Activated T-helper 1 cell treated with anti-CD3 and anti-CD28 coated beads, Interleukin-12 subunit alpha, Interleukin-12 subunit beta, Interleukin-2, Interleukin-4 antibody, amounts not matched to agents 30 ng/mL and 10 ng/mL and 1 ng/mL, durations not matched to agents 14 hours and 24 hours and 36 hours (primary cell): ENCODE measurements at regions of chr22 and their contacts with region 1.

Region 1: DNA sequence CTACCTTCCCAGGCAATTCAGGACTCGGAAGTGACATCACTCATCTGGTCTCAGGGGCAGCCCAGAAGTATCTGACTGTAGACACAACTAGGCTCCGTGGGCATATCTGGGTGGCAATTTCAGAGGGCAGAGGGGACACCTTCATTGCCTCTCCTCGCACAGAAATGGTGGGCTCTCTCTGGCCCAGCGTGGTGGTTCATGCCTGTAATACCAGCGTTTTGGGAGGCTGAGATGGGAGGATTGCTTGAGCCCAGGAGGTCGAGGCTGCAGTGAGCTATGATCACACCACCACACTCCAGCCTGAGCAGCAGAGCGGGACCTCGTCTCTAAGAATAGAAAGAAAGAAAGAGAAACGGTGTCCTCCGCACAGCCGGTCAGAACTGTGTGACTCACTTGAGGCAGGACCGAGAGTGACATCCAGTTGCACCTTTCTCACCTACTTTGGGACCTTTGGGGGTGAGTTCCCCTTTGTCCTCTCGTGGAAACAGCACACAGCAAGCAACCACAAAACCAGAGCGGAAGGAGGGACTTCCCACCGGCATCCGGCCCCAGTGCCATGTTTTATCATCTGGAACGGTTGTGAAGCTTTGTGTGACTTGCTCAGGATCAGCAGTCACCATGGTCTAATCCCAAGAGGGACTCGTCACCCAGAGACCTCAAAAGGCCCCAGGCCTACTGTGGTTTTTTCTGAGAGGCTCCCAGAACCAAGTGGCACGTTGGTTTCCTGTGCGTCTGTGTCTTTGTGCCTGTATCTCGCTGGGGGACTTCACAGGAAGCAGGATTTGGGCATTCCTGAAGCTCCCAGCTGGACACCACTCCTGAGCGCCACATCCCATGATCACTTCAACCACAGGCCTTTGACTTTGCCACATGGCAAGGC is 38.4 kb upstream of the EMID1 start:
- DNase-seq: peak; percentile 59
- H3K4me3 Mint-ChIP-seq: peak overlapping the region; percentile 53
- H3K27ac Mint-ChIP-seq: peak overlapping the region; percentile 69
- H3K4me1 Mint-ChIP-seq: peaks cover 24% of the 10 kb centered on the region
- H3K27me3 Mint-ChIP-seq: peaks cover 38% of the 10 kb centered on the region

Region 2: DNA sequence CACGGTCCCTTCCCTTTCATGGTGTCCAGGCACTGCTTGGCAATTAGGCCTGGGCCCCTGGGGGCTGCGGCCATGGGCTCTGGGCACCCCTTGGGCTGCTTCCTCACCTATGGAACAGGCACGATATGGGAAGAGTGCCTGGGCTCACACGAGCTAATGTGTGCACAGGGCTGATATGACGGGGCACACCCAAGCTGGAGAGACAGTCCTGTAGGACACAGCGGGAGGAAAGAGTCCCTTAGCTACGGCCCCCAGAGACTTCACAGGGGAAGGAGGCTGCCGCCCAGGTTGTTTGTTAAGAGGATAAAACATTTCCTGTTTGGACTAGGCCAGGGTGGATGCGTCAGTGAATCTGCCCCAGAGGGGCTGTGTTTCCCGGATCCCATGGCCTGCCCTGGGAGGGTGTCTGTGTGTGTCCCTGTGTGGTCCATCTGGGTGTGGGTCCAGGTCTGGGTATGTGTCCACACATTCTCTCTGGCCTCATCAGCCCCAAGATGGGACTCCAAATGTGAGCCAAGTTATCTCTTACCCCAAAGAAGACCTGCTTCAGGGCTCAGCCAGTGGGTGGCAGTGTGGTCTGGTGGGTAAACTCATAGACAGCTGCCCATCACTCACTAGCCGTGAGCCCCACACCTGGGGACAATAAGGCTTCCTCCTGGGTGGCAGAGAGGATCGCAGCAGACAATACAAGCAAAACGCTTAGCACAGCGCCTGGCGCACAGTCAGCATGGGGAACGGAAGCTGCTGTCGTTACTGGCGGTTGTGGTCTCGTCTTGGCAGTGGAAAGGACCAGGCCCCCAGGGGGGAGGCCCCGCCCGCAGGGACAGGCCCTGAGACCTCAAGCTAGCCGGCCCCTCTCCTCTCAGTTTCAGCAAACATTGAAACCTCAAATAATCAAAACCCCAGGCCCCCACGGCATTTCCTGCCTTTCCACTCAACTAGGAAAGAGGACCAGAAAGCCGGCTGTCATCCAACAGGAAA is 35.2 kb after region 1 on chr22:
- intact Hi-C with region 1: loop called (anchors 2 kb)
- DNase-seq: peak; percentile 35
- H3K4me3 Mint-ChIP-seq: peak overlapping the region; percentile 45
- H3K27ac Mint-ChIP-seq: peak overlapping the region; percentile 58
- H3K4me1 Mint-ChIP-seq: peaks cover 19% of the 10 kb centered on the region
- H3K27me3 Mint-ChIP-seq: peaks cover 37% of the 10 kb centered on the region

Region 3: GRCh38 chr22:29233277-29233877 is 66.1 kb after region 1 on chr22:
- intact Hi-C with region 1: no loop called
- DNase-seq: no peak
- H3K4me3 Mint-ChIP-seq: no peak overlapping the region
- H3K27ac Mint-ChIP-seq: no peak overlapping the region
- H3K4me1 Mint-ChIP-seq: no peaks in the 10 kb centered on the region
- H3K27me3 Mint-ChIP-seq: no peaks in the 10 kb centered on the region

Region 4: DNA sequence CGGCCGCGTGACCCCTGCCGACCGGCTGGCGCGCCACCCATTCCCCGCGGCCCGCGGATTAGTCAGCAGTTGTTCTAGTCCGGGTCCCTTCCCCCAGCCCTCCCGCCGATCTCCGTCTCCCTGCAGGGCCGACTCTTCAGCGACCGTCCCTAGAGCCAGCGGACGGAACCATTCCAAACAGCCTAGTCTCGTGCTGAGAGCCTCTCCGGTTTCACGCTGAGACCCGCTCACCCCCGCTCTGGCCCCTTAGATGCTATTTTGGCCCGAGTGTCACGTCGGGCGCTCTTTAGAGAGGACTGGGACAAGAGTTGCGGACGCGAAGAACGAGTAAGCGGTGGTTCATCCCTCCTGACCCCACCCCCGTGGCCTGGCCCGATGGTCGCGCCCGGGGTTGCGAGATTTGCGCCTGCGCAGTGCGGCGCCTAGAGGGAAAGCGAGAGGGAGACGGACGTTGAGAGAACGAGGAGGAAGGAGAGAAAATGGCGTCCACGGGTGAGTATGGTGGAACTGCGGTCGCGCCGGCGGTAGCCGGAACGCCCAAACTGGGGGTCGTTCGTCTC is 100.7 kb after region 1 on chr22 and contains the starts of genes EWSR1 and RHBDD3:
- intact Hi-C with region 1: no loop called
- DNase-seq: peak; percentile 97
- H3K4me3 Mint-ChIP-seq: peak within 1 kb of the TSS; percentile 96
- H3K27ac Mint-ChIP-seq: peak within 1 kb of the TSS; percentile 99
- H3K4me1 Mint-ChIP-seq: peaks cover 49% of the 10 kb centered on the region
- H3K27me3 Mint-ChIP-seq: no peaks in the 10 kb centered on the region
- total RNA-seq, gene EWSR1: 454 and 463 TPM in 2 replicates
- total RNA-seq, gene RHBDD3: 53.3 and 59.4 TPM in 2 replicates

Region 5: GRCh38 chr22:29870574-29870973 is 703.3 kb after region 1 on chr22:
- intact Hi-C with region 1: no loop called
- DNase-seq: no peak
- H3K4me3 Mint-ChIP-seq: no peak overlapping the region
- H3K27ac Mint-ChIP-seq: no peak overlapping the region
- H3K4me1 Mint-ChIP-seq: no peaks in the 10 kb centered on the region
- H3K27me3 Mint-ChIP-seq: peaks cover 16% of the 10 kb centered on the region